ENCODE measurements at regions of chr6 and their contacts with region 1.

Region 1: GRCh38 chr6:13328076-13328874 is at the start of gene TBC1D7:
- DNase-seq: peak; percentile 95
- CTCF ChIP-seq: no peak

Region 2: DNA sequence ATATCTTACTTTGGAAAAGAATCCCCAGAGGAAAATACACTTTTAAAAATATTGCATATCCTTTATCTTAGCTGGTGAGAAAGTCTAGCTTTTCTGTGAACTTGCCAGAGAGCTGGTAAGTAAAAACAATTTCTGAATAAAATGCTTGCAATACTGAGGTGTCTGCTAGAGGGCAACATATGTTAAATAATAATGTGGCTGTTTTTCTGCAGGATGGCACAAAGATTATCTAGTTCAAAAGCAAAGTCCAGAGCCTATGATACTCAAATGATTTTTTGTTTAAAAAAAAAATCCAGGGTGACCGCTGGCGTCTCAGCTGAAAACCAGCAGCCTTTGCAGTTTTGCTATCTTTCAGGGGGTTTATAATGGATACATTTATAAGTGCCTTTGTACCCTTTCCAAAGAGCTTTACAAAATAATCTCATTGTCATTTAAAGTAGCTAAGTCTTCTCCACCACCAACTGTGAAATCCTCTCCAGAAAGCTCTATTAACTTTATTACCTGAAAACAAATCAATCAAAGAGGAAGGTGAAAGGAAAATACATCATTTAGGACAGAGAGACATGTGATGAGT is 416.8 kb before region 1 on chr6:
- CTCF ChIA-PET with region 1: interaction called, 18 read pairs
- POLR2A ChIA-PET with region 1: no interaction called
- DNase-seq: no peak
- CTCF ChIP-seq: peak; percentile 53

Region 3: GRCh38 chr6:13194852-13195251 is 133.4 kb before region 1 on chr6:
- CTCF ChIA-PET with region 1: interaction called, 74 read pairs
- POLR2A ChIA-PET with region 1: interaction called, 3 read pairs
- DNase-seq: peak; percentile 78
- CTCF ChIP-seq: peak; percentile 73

Region 4: DNA sequence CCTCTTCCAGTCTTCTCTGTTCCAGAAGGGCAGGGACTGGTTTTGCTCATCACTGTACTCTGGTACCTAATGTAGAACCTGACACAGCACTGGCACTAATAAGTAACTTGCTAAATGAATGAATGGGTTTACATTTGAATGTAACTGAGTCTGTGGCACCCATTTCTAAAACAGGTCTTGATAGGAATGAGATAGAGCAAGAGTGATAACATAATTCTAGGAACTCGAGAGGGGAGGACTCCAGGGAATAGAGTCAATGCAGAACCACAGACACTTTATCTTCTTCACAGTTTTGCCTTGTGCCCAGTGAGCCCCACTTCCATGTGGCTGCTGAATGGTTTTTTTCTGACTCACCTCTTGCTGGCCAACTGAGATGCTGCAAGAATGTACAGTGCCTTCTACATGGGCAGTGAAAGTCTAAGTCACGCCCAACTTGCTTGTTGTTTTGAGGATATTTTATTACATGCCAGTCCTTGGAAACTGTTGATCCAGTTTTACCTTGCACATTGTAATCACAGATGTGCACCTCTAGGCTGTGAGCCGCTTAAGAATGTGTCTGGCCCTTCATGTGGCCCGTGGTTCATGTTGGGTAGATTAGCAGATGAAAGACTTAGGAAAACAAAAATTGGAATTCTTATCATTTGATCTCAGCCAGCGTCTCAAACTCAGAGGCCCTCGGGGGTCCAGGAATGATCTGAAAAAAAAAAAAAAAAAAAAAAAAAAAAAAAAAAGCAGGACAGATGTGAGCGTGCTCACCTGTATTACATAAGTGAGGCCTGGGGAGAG is 60.9 kb before region 1 on chr6:
- CTCF ChIA-PET with region 1: interaction called, 6 read pairs
- POLR2A ChIA-PET with region 1: interaction called, 10 read pairs
- DNase-seq: no peak
- CTCF ChIP-seq: no peak

Measured in GM10248 (cell line).